Motor neuron (in vitro differentiated cells): ENCODE measurements at regions of chr11 and their contacts with region 1.

Region 1: DNA sequence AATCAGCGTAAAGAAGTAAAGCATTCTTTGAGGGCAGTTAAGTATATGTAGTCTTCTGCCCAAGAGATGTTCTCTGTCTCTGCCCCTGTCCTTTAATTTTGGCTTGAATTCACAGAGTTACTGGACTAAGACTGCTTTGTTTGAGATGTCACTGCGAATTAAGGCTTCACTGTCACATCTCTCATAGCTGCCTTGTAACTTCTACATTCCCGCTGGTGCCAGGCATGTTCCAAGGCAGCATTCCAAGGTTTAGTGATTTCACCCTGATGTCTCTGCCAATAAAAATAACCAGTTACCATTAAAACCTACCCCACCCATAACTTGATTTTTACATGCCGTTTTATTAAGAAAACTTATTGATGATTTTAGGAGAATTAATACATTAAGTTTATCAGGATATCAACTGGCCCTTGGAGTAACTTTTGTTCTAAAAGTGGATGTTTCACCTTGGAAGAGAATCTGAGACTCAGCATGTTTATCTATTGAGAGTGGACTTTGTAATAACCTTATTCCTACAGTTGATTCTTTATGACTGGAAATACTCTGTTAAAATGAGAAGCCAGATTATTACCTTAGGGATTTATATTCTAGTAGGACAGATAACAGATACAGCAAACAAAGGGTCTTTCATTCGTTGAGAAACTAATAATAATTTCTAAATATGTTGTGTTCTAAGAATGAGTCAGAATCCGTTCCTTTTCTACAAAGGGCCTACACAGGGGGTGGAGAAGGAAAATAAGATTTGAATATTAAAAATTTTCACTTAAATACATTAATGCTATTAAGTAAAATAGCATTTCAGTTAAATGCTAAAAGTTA is 110.2 kb downstream of the UVRAG start:
- ATAC-seq: peak in 2 of 8 experiments; percentile 25 to 31
- H3K4me3 ChIP-seq: no peak overlapping the region
- H3K27ac ChIP-seq: no peak overlapping the region
- H3K4me1 ChIP-seq: no peaks in the 10 kb centered on the region

Region 2: GRCh38 chr11:75654314-75654713 is 270.9 kb before region 1 on chr11:
- in situ Hi-C with region 1: no loop called
- ATAC-seq: no peak
- H3K4me3 ChIP-seq: no peak overlapping the region
- H3K27ac ChIP-seq: no peak overlapping the region
- H3K4me1 ChIP-seq: peaks cover 10 to 26% of the 10 kb centered on the region in 2 donors

Region 3: GRCh38 chr11:75760710-75761493 is 164.3 kb before region 1 on chr11:
- in situ Hi-C with region 1: no loop called
- ATAC-seq: peak in 6 of 8 experiments; percentile 41 to 59 (median 53)
- H3K4me3 ChIP-seq: no peak overlapping the region
- H3K27ac ChIP-seq: no peak overlapping the region
- H3K4me1 ChIP-seq: peaks cover 0 to 5% of the 10 kb centered on the region in 2 donors

Region 4: DNA sequence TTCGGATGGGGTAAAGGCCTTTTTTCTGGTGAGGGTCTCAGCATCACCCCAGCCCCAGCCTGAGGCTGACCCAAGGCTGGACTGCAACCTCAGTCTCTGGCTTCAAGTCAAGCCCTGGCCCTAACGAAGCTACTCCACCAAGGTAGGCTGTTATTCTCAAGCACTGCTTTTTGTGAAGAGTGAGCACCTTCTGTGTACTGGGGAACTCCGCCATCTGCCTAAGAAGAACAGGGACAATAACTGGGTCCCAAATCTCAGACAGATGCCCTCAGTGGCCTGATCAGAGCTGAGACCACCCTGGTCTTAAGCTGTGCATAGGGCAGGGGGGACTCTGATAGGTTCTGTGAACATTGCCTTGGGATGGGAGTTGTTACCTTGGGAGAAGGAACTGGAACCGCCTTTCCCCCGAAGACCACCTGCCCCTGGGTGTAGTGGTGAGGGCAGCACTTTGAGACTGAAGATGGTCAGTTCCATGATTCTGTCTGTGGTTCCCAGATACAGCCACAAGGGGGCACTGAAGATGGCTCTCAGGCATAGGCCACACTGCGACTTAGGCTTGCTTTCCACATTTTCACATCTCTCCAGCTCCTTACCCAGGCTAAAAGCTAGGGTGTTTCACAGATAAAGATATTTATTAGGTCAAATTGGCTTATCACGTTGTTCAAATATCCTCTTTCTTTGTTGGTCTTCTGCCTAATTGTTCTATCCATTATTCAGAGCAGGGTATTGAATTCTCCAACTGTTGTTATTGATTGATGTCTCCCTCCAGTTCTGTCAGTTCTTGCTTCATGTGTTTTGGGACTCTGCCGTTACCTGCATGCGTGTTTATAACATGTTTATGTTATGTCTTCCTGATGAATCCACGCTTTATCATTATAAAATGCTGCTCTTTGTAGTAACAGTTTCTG is 122.0 kb before region 1 on chr11:
- in situ Hi-C with region 1: no loop called
- ATAC-seq: peak; percentile 78 to 98 (median 92)
- H3K4me3 ChIP-seq: no peak overlapping the region
- H3K27ac ChIP-seq: no peak overlapping the region
- H3K4me1 ChIP-seq: no peaks in the 10 kb centered on the region

Region 5: GRCh38 chr11:76152086-76152681 is 227.0 kb after region 1 on chr11:
- in situ Hi-C with region 1: loop called in 1 of 9 experiments (anchors 25 kb)
- ATAC-seq: peak in 7 of 8 experiments; percentile 58 to 77 (median 71)
- H3K4me3 ChIP-seq: no peak overlapping the region
- H3K27ac ChIP-seq: no peak overlapping the region
- H3K4me1 ChIP-seq: peaks cover 0 to 13% of the 10 kb centered on the region in 2 donors